ENCODE measurements at regions of chr10 and their contacts with region 1.

Region 1: DNA sequence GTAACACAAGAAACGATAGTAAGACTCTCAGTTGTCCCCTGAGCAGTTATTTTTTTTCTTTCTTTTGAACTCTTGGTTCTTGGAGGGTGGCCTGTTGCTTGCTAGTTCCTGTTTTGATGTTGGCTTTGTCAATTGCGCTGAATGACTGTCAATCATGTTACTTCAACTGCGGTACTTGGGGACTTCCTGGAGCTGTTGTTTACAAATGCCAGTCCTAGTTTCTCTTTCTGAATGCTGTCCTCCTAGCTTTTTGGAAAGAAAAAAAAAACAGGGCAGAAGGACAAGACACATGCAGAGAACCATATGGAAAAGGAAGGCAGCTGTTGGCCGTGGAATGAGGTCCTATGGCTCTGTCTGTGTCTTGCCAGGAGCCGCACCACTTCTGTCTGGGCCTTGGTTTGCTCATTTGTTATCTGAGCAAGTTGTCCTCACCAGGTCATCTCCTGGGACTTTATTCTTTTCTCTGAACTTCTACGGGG is 7.0 kb upstream of the PDCD4 start:
- DNase-seq: peak; percentile 69
- H3K4me3 Mint-ChIP-seq: peak overlapping the region; percentile 58
- H3K27ac Mint-ChIP-seq: peak overlapping the region; percentile 84
- H3K4me1 Mint-ChIP-seq: peaks cover 96% of the 10 kb centered on the region
- H3K27me3 Mint-ChIP-seq: no peaks in the 10 kb centered on the region

Region 2: DNA sequence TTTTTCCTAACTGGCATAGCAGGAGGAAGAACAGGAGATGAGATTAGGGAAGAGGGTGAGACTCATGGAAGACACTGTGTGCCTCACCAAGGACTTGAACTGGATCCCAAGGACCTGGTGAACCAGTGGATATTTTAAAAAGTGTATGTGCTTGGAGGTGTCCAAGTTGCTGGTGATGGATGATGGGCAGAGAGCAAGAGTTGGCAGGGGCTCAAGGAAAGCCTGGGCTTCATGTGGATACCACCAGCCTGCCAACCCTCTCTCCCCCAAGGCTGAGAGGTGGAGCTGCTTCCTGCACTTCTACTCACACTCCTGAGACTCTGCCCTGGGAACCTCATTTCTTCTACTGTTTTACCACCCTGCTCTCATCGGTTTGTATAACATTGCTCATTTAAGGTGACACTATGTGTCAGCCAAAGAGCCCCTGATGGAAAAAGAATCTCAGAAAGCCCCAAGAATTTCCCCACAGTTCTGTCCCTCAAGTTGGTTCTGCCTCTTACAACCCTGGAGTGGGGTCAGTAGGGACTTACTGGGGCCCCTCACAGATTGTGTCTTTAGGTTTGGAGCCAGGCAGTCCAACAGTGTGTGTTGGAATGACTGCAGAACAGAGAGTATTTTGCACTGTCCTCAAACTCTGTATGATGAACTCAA is 49.2 kb before region 1 on chr10:
- CTCF ChIA-PET with region 1: no interaction called
- intact Hi-C with region 1: loop called (anchors 2 kb)
- DNase-seq: peak; percentile 56
- H3K4me3 Mint-ChIP-seq: no peak overlapping the region
- H3K27ac Mint-ChIP-seq: peak overlapping the region; percentile 15
- H3K4me1 Mint-ChIP-seq: peaks cover 30% of the 10 kb centered on the region
- H3K27me3 Mint-ChIP-seq: no peaks in the 10 kb centered on the region

Region 3: GRCh38 chr10:110834629-110835301 is 29.9 kb before region 1 on chr10:
- CTCF ChIA-PET with region 1: interaction called, 3 read pairs
- intact Hi-C with region 1: loop called (anchors 1 kb)
- DNase-seq: peak; percentile 58
- H3K4me3 Mint-ChIP-seq: no peak overlapping the region
- H3K27ac Mint-ChIP-seq: peak overlapping the region; percentile 47
- H3K4me1 Mint-ChIP-seq: peaks cover 39% of the 10 kb centered on the region
- H3K27me3 Mint-ChIP-seq: no peaks in the 10 kb centered on the region

Region 4: DNA sequence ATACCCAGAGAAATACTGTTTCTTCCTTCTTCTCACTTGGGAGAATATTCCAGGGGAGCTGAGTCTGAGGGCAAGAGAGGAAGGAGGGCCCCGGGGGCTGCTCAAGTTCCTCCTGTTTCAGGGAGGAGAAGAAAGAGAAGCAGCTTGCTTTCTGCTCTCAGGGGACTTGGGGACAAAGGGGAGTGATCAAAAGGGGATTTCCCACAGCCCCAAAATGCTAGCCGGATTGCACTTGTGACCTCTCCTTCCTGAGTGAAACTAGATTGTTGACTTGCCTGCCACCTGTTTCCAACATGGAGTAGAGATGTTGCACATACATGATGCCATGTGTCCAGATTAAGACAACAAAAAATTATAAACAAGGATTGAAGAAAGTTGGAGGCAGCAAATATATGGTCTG is 21.7 kb before region 1 on chr10:
- CTCF ChIA-PET with region 1: interaction called, 3 read pairs
- intact Hi-C with region 1: loop called (anchors 1 kb)
- DNase-seq: peak; percentile 77
- H3K4me3 Mint-ChIP-seq: no peak overlapping the region
- H3K27ac Mint-ChIP-seq: peak overlapping the region; percentile 65
- H3K4me1 Mint-ChIP-seq: peaks cover 43% of the 10 kb centered on the region
- H3K27me3 Mint-ChIP-seq: no peaks in the 10 kb centered on the region

Region 5: GRCh38 chr10:110883924-110884323 is 19.2 kb after region 1 on chr10:
- CTCF ChIA-PET with region 1: interaction called, 4 read pairs
- intact Hi-C with region 1: loop called (anchors 1 kb)
- DNase-seq: no peak
- H3K4me3 Mint-ChIP-seq: peak overlapping the region; percentile 11
- H3K27ac Mint-ChIP-seq: peak overlapping the region; percentile 39
- H3K4me1 Mint-ChIP-seq: peaks cover 70% of the 10 kb centered on the region
- H3K27me3 Mint-ChIP-seq: no peaks in the 10 kb centered on the region

Region 6: GRCh38 chr10:110893559-110894179 is 29.0 kb after region 1 on chr10:
- CTCF ChIA-PET with region 1: interaction called, 13 read pairs
- intact Hi-C with region 1: no loop called
- DNase-seq: no peak
- H3K4me3 Mint-ChIP-seq: no peak overlapping the region
- H3K27ac Mint-ChIP-seq: no peak overlapping the region
- H3K4me1 Mint-ChIP-seq: peaks cover 42% of the 10 kb centered on the region
- H3K27me3 Mint-ChIP-seq: no peaks in the 10 kb centered on the region

Measured in activated naive CD4-positive, alpha-beta T cell treated with anti-CD3 and anti-CD28 coated beads for 36 hours (primary cell).